Naive thymus-derived CD4-positive, alpha-beta T cell (primary cell): ENCODE measurements at regions of chr11 and their contacts with region 1.

Region 1: DNA sequence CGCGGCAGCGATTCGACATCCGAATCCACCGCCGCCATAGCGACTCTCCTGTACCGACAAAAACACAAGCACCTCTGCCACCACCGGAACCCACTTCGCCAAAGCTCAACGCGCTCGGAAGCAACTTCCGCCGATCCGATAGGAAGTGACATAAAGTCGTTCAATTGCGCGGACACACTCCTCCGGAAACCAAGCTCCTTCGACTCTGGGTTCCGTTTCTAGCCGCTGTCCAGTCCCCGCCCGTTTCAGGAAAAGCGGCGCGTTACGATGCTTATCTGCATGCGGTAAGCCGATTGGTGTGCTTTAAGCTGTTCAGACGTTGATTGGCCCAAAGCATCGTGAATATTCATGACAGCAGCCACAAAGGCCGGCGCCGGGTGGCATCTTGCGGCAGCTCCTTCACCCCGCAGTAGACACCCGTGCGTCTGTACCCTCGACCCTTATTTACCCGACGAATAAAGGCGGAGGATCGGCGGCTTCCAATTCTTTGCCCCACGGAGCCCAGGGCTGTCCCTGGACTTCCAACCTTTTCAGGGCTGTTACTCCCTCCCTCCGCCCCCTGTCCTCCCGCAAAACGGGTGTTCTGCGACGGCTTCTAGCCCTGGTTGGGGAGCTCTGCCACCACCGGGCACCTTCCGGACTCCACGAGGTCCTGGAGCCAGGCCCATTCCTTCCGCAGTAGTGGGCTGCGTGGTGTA is at the start of gene TUT1:
- DNase-seq: peak; percentile 78 to 99 (median 98)
- ATAC-seq: peak; percentile 92
- H3K4me3 ChIP-seq: peak within 1 kb of the TSS; percentile 82
- H3K4me3 Mint-ChIP-seq: peak within 1 kb of the TSS; percentile 87 to 100 (median 96)
- H3K27ac ChIP-seq: peak within 1 kb of the TSS; percentile 94
- H3K27ac Mint-ChIP-seq: peak within 1 kb of the TSS; percentile 92 to 99 (median 96)
- H3K4me1 ChIP-seq: peaks cover 14 to 35% of the 10 kb centered on the region in 2 donors
- H3K4me1 Mint-ChIP-seq: peaks cover 26 to 66% (median 52%) of the 10 kb centered on the region in 7 donors
- H3K27me3 ChIP-seq: no peaks in the 10 kb centered on the region
- H3K27me3 Mint-ChIP-seq: peaks cover 0 to 4% (median 0%) of the 10 kb centered on the region in 5 donors
- total RNA-seq, gene TUT1: 34.5 to 54.6 (median 37.4) TPM

Region 2: GRCh38 chr11:62580959-62581715 is 10.5 kb before region 1 on chr11:
- CTCF ChIA-PET with region 1: interaction called, 3 read pairs
- POLR2A ChIA-PET with region 1: interaction called, 92 read pairs
- intact Hi-C with region 1: no loop called
- DNase-seq: no peak
- ATAC-seq: no peak
- H3K4me3 ChIP-seq: no peak overlapping the region
- H3K4me3 Mint-ChIP-seq: no peak overlapping the region
- H3K27ac ChIP-seq: no peak overlapping the region
- H3K27ac Mint-ChIP-seq: peak overlapping the region in 2 of 9 donors; percentile 48 to 75
- H3K4me1 ChIP-seq: no peaks in the 10 kb centered on the region
- H3K4me1 Mint-ChIP-seq: peaks cover 0 to 12% (median 5%) of the 10 kb centered on the region in 7 donors
- H3K27me3 ChIP-seq: no peaks in the 10 kb centered on the region
- H3K27me3 Mint-ChIP-seq: no peaks in the 10 kb centered on the region

Region 3: DNA sequence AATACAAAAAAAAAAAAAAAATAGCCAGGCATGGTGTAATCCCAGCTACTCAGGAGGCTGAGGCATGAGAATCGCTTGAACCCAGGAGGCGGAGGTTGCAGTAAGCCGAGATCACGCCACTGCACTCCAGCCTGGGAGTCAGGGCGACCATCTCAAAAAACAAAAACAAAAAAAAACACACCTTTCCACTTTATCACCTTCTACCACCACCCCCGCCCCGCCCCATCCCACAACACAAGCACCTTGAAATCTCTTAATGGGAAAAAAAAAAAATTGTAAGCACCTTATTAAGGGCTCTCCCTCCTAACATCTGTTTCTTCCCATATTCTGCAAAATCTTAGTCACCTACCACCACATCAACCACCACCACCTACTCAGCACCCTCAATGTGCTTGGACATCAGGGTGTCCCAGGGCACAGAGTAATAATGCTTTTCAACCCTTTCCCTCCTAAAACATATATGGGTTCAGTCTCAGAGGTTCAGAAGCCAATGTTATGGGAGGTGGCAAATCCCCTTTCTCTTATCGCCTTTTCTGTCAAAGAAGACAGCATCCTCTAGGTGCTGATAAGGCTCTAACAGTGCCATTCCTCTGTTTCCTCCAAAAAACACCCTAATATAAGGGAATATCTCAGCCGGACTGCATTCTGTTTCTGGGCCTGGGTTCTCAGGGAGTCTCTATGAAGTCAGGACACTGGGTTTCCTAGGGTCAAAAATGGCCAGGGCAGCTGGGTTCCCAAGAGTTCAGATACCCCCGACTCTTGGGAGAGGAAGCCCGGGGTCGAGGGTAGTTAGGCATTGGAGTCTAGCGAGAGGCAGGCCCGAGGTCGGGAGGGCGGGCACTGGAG is 60.8 kb after region 1 on chr11:
- CTCF ChIA-PET with region 1: interaction called, 4 read pairs
- POLR2A ChIA-PET with region 1: interaction called, 41 read pairs
- intact Hi-C with region 1: loop called (anchors 1 kb)
- DNase-seq: peak in 4 of 9 donors; percentile 13 to 59 (median 22)
- ATAC-seq: no peak
- H3K4me3 ChIP-seq: peak overlapping the region; percentile 87
- H3K4me3 Mint-ChIP-seq: peak overlapping the region; percentile 75 to 94 (median 90)
- H3K27ac ChIP-seq: peak overlapping the region; percentile 95
- H3K27ac Mint-ChIP-seq: peak overlapping the region; percentile 88 to 98 (median 96)
- H3K4me1 ChIP-seq: peaks cover 13 to 16% of the 10 kb centered on the region in 2 donors
- H3K4me1 Mint-ChIP-seq: peaks cover 11 to 36% (median 22%) of the 10 kb centered on the region in 7 donors
- H3K27me3 ChIP-seq: no peaks in the 10 kb centered on the region
- H3K27me3 Mint-ChIP-seq: no peaks in the 10 kb centered on the region

Region 4: GRCh38 chr11:62694455-62695167 is 103.0 kb after region 1 on chr11:
- CTCF ChIA-PET with region 1: interaction called, 31 read pairs
- POLR2A ChIA-PET with region 1: interaction called, 26 read pairs
- intact Hi-C with region 1: loop called (anchors 1 kb)
- DNase-seq: peak; percentile 50 to 80 (median 70)
- ATAC-seq: peak; percentile 93
- H3K4me3 ChIP-seq: no peak overlapping the region
- H3K4me3 Mint-ChIP-seq: peak overlapping the region in 1 of 10 donors; percentile 14
- H3K27ac ChIP-seq: no peak overlapping the region
- H3K27ac Mint-ChIP-seq: peak overlapping the region in 5 of 9 donors; percentile 1 to 78 (median 18)
- H3K4me1 ChIP-seq: peaks cover 0 to 6% of the 10 kb centered on the region in 2 donors
- H3K4me1 Mint-ChIP-seq: peaks cover 0 to 8% (median 6%) of the 10 kb centered on the region in 7 donors
- H3K27me3 ChIP-seq: no peaks in the 10 kb centered on the region
- H3K27me3 Mint-ChIP-seq: no peaks in the 10 kb centered on the region

Region 5: GRCh38 chr11:62737196-62737595 is 145.6 kb after region 1 on chr11:
- CTCF ChIA-PET with region 1: no interaction called
- POLR2A ChIA-PET with region 1: no interaction called
- intact Hi-C with region 1: no loop called
- DNase-seq: no peak
- ATAC-seq: no peak
- H3K4me3 ChIP-seq: no peak overlapping the region
- H3K4me3 Mint-ChIP-seq: no peak overlapping the region
- H3K27ac ChIP-seq: no peak overlapping the region
- H3K27ac Mint-ChIP-seq: no peak overlapping the region
- H3K4me1 ChIP-seq: peaks cover 0 to 9% of the 10 kb centered on the region in 2 donors
- H3K4me1 Mint-ChIP-seq: peaks cover 0 to 9% (median 7%) of the 10 kb centered on the region in 7 donors
- H3K27me3 ChIP-seq: no peaks in the 10 kb centered on the region
- H3K27me3 Mint-ChIP-seq: no peaks in the 10 kb centered on the region

Region 6: GRCh38 chr11:62771144-62772021 is 179.8 kb after region 1 on chr11 and contains the start of gene TAF6L:
- CTCF ChIA-PET with region 1: no interaction called
- POLR2A ChIA-PET with region 1: interaction called, 3 read pairs
- intact Hi-C with region 1: loop called in 1 of 2 experiments (anchors 1 kb)
- DNase-seq: peak; percentile 80 to 98 (median 82)
- ATAC-seq: peak; percentile 92
- H3K4me3 ChIP-seq: peak within 1 kb of the TSS; percentile 66
- H3K4me3 Mint-ChIP-seq: peak within 1 kb of the TSS; percentile 88 to 98 (median 94)
- H3K27ac ChIP-seq: peak within 1 kb of the TSS; percentile 82
- H3K27ac Mint-ChIP-seq: peak within 1 kb of the TSS; percentile 89 to 97 (median 94)
- H3K4me1 ChIP-seq: peaks cover 10 to 13% of the 10 kb centered on the region in 2 donors
- H3K4me1 Mint-ChIP-seq: peaks cover 17 to 37% (median 27%) of the 10 kb centered on the region in 7 donors
- H3K27me3 ChIP-seq: no peaks in the 10 kb centered on the region
- H3K27me3 Mint-ChIP-seq: no peaks in the 10 kb centered on the region
- total RNA-seq, gene TAF6L: 13.1 to 34.9 (median 24.1) TPM

Region 7: GRCh38 chr11:62855571-62856332 is 264.2 kb after region 1 on chr11:
- CTCF ChIA-PET with region 1: no interaction called
- POLR2A ChIA-PET with region 1: interaction called, 26 read pairs
- intact Hi-C with region 1: loop called in 1 of 2 experiments (anchors 1 kb)
- DNase-seq: peak; percentile 96 to 100 (median 99)
- ATAC-seq: peak; percentile 97
- H3K4me3 ChIP-seq: peak overlapping the region; percentile 97
- H3K4me3 Mint-ChIP-seq: peak overlapping the region; percentile 93 to 100 (median 98)
- H3K27ac ChIP-seq: peak overlapping the region; percentile 85
- H3K27ac Mint-ChIP-seq: peak overlapping the region; percentile 86 to 98 (median 94)
- H3K4me1 ChIP-seq: peaks cover 33 to 39% of the 10 kb centered on the region in 2 donors
- H3K4me1 Mint-ChIP-seq: peaks cover 34 to 77% (median 46%) of the 10 kb centered on the region in 7 donors
- H3K27me3 ChIP-seq: no peaks in the 10 kb centered on the region
- H3K27me3 Mint-ChIP-seq: peaks cover 0 to 6% (median 0%) of the 10 kb centered on the region in 5 donors